Aorta (tissue), 5 donors: ENCODE measurements at regions of chr2 and their contacts with region 1.

Region 1: GRCh38 chr2:114550895-114551793 is 108.7 kb downstream of the DPP10 start:
- DNase-seq: peak in 1 of 2 donors; percentile 61
- ATAC-seq: peak; percentile 75
- H3K4me3 ChIP-seq: no peak overlapping the region
- H3K27ac ChIP-seq: no peak overlapping the region
- H3K4me1 ChIP-seq: no peaks in the 10 kb centered on the region
- H3K27me3 ChIP-seq: no peaks in the 10 kb centered on the region

Region 2: GRCh38 chr2:113977660-113978523 is 573.3 kb before region 1 on chr2:
- intact Hi-C with region 1: loop called (anchors 5 kb)
- DNase-seq: no peak
- ATAC-seq: no peak
- H3K4me3 ChIP-seq: no peak overlapping the region
- H3K27ac ChIP-seq: no peak overlapping the region
- H3K4me1 ChIP-seq: no peaks in the 10 kb centered on the region
- H3K27me3 ChIP-seq: no peaks in the 10 kb centered on the region

Region 3: GRCh38 chr2:114201781-114202180 is 349.4 kb before region 1 on chr2:
- intact Hi-C with region 1: loop called in 1 of 2 experiments (anchors 2 kb)
- DNase-seq: no peak
- ATAC-seq: no peak
- H3K4me3 ChIP-seq: no peak overlapping the region
- H3K27ac ChIP-seq: no peak overlapping the region
- H3K4me1 ChIP-seq: peaks cover 0 to 2% of the 10 kb centered on the region in 2 donors
- H3K27me3 ChIP-seq: no peaks in the 10 kb centered on the region

Region 4: DNA sequence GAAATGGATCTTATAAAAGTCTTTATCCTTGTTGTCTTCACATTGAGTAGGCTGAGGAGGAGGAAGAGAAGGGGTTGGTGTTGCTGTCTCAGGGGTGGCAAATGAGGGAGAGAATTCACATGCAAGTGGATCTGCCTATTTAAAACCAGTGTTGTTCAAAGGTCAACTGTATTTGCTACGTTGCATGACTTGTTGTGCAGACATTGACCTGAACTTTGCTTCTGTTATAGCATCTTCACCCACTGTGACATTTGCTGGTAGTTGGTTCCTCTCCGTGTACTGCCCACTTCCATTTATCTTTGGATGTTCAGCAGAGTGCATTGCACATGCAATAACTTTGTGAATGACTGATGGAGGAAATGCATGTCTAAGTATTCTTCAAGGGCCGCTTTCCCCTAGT is 337.3 kb before region 1 on chr2:
- intact Hi-C with region 1: loop called in 1 of 2 experiments (anchors 5 kb)
- DNase-seq: no peak
- ATAC-seq: no peak
- H3K4me3 ChIP-seq: no peak overlapping the region
- H3K27ac ChIP-seq: no peak overlapping the region
- H3K4me1 ChIP-seq: no peaks in the 10 kb centered on the region
- H3K27me3 ChIP-seq: no peaks in the 10 kb centered on the region